Naive thymus-derived CD4-positive, alpha-beta T cell (primary cell): ENCODE measurements at regions of chr2 and their contacts with region 1.

Region 1: DNA sequence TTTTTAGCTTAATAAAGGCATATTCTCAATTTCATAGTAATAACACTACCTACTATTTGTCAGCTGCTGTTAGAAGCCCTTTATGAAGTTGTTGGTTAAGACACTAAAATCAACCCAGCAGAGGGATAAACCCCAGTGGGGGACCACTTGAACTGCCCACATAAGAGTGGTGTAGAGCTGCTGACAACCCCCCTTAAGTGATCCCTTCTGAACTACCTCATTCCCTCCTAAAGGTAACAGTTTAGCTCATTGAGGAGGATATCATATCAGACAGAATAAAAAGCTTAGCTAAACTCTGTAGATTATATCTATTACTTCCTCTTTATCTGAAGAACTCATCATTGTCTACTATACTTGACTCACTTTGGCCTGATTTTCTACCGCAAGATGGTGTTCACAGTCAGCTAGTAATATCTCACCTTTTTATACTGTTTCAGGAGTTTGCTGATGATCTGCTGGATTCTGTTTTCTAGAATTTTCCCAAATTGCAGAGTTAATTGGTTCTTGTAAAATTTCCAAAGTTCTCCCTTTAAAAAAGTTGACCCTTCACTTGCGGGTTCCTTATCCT is 16.2 kb downstream of the GALM start:
- DNase-seq: peak in 1 of 9 donors; percentile 18
- ATAC-seq: peak; percentile 83
- H3K4me3 ChIP-seq: peak overlapping the region; percentile 17
- H3K4me3 Mint-ChIP-seq: peak overlapping the region in 7 of 10 donors; percentile 12 to 55 (median 27)
- H3K27ac ChIP-seq: peak overlapping the region; percentile 4
- H3K27ac Mint-ChIP-seq: peak overlapping the region; percentile 11 to 82 (median 59)
- H3K4me1 ChIP-seq: peaks cover 14 to 51% of the 10 kb centered on the region in 2 donors
- H3K4me1 Mint-ChIP-seq: peaks cover 8 to 50% (median 32%) of the 10 kb centered on the region in 7 donors
- H3K27me3 ChIP-seq: no peaks in the 10 kb centered on the region
- H3K27me3 Mint-ChIP-seq: no peaks in the 10 kb centered on the region

Region 2: DNA sequence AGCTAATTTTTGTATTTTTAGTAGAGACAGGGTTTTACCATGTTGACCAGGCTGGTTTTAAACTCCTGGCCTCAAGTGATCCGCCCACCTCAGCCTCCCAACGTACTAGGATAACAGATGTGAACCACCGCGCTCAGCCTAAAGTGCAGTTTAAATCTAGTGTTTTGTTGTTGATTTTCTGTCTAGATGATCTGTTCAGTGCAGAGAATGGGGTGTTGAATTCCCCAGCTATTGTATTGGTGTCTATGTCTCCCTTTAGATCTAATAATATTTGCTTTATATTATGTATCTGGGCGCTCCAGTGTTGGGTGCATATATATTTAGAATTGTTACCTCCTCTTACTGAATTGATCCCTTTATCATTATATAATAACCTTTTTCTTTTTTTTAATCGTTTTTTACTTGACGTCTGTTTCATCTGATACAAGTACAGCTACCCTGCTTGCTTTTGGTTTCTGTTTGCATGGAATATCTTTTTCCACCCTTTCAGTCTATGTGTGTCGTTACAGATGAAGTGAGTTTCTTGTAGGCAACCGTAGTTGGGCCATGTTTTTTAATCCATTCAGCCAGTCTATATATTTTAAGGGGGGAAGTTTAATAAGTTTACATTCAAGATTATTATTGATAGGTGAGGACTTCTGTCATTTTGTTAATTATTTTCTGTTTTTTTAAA is 18.2 kb after region 1 on chr2:
- CTCF ChIA-PET with region 1: no interaction called
- POLR2A ChIA-PET with region 1: no interaction called
- intact Hi-C with region 1: loop called in 1 of 2 experiments (anchors 2 kb)
- DNase-seq: peak in 3 of 9 donors; percentile 14 to 47 (median 31)
- ATAC-seq: peak; percentile 55
- H3K4me3 ChIP-seq: peak overlapping the region; percentile 22
- H3K4me3 Mint-ChIP-seq: peak overlapping the region in 8 of 10 donors; percentile 37 to 73 (median 66)
- H3K27ac ChIP-seq: peak overlapping the region; percentile 29
- H3K27ac Mint-ChIP-seq: peak overlapping the region; percentile 35 to 88 (median 76)
- H3K4me1 ChIP-seq: peaks cover 4 to 63% of the 10 kb centered on the region in 2 donors
- H3K4me1 Mint-ChIP-seq: peaks cover 0 to 64% (median 32%) of the 10 kb centered on the region in 7 donors
- H3K27me3 ChIP-seq: no peaks in the 10 kb centered on the region
- H3K27me3 Mint-ChIP-seq: no peaks in the 10 kb centered on the region

Region 3: GRCh38 chr2:38720613-38721241 is 38.6 kb after region 1 on chr2:
- CTCF ChIA-PET with region 1: interaction called, 3 read pairs
- POLR2A ChIA-PET with region 1: no interaction called
- intact Hi-C with region 1: loop called (anchors 1 kb)
- DNase-seq: no peak
- ATAC-seq: no peak
- H3K4me3 ChIP-seq: no peak overlapping the region
- H3K4me3 Mint-ChIP-seq: peak overlapping the region in 2 of 10 donors; percentile 28 to 29
- H3K27ac ChIP-seq: no peak overlapping the region
- H3K27ac Mint-ChIP-seq: peak overlapping the region in 4 of 9 donors; percentile 18 to 67 (median 34)
- H3K4me1 ChIP-seq: peaks cover 7 to 27% of the 10 kb centered on the region in 2 donors
- H3K4me1 Mint-ChIP-seq: peaks cover 11 to 51% (median 29%) of the 10 kb centered on the region in 7 donors
- H3K27me3 ChIP-seq: no peaks in the 10 kb centered on the region
- H3K27me3 Mint-ChIP-seq: no peaks in the 10 kb centered on the region